ENCODE measurements at regions of chr4 and their contacts with region 1.

Region 1: DNA sequence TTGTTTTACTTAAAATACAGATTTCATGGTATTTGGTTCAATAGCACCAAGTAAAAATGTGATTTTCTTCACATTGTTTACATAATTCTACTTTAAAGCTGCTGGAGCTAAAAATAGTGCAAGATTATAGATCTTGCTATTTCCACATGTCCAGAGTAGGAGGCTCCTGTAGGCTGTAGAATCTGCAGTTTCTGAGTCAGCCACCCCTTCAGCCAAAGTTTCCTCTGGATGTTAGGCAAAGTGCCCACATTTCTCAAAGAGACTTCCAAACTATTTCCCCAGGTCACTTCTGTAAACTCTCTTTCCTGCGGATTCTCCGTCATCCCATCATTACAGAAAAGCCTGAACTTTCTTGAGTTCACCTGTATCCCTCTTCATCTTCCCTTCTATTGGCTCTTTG is 342.5 kb upstream of the FSTL5 start:
- DNase-seq: no peak
- H3K4me3 ChIP-seq: no peak overlapping the region
- H3K27ac ChIP-seq: no peak overlapping the region
- H3K4me1 ChIP-seq: no peaks in the 10 kb centered on the region
- H3K27me3 ChIP-seq: no peaks in the 10 kb centered on the region
- CTCF ChIP-seq: no peak

Region 2: GRCh38 chr4:162675661-162676060 is 169.4 kb after region 1 on chr4:
- dilution Hi-C with region 1: no loop called
- DNase-seq: no peak
- H3K4me3 ChIP-seq: no peak overlapping the region
- H3K27ac ChIP-seq: no peak overlapping the region
- H3K4me1 ChIP-seq: no peaks in the 10 kb centered on the region
- H3K27me3 ChIP-seq: no peaks in the 10 kb centered on the region
- CTCF ChIP-seq: no peak

Region 3: GRCh38 chr4:163048447-163048846 is 542.2 kb after region 1 on chr4:
- dilution Hi-C with region 1: loop called (anchors 25 kb)
- DNase-seq: no peak
- H3K4me3 ChIP-seq: no peak overlapping the region
- H3K27ac ChIP-seq: no peak overlapping the region
- H3K4me1 ChIP-seq: no peaks in the 10 kb centered on the region
- H3K27me3 ChIP-seq: no peaks in the 10 kb centered on the region
- CTCF ChIP-seq: peak; percentile 48 to 58 (median 49)

Region 4: DNA sequence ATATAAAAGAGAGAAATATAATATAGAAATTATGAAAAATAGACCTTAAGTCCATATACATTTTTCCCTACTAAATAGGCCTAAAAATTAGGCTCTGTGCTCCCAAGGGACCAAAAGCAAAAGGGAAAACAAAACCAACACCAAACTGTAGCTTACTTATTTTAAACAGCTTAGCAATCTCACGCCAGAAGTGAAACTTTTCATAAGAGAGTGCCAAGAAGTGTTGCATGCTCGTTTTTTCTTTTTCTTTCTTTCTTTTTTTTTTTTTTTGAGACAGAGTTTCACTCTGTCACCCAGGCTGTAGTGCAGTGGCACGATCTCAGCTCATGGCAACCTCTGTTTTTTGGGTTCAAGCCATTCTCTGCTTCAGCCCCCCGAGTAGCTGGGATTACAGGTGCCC is 1238.6 kb after region 1 on chr4:
- dilution Hi-C with region 1: no loop called
- DNase-seq: no peak
- H3K4me3 ChIP-seq: no peak overlapping the region
- H3K27ac ChIP-seq: no peak overlapping the region
- H3K4me1 ChIP-seq: no peaks in the 10 kb centered on the region
- H3K27me3 ChIP-seq: no peaks in the 10 kb centered on the region
- CTCF ChIP-seq: no peak

Measured in keratinocyte (primary cell).